Panc1 (cell line): ENCODE measurements at regions of chr11 and their contacts with region 1.

Region 1: DNA sequence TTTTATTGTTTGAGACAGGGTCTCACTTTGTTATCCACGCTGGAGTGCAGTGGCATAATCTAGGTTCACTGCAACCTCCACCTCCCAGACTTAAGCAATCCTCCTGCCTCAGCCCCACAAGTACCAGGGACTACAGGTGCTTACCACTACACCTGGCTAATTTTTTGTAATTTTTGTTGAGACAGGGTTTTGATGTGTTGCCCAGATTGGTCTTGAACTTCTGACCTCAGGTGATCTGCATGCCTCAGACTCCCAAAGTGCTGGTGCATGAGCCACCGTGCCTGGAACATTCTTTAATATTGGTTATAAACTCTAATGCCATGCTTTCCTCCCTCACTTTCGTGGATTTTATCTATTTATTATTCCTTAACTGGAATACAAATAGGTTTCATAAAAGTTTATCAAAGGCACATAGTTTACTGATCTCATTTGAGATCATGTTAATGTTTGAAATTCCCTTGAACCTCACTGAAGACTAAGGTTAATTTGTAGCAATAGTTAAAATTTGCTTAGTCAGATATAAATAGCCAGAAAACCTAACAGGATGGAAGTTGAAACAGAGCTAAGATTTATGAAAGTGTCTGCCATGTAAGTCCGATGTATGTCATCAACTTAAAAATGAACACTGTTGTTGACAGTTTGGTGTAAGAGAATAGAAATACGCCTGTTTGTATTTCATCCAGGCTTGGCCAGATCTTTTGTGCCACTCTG is 27.6 kb downstream of the KDM2A start:
- DNase-seq: no peak
- ATAC-seq: no peak
- H3K4me3 ChIP-seq: no peak overlapping the region
- H3K27ac ChIP-seq: no peak overlapping the region
- H3K4me1 ChIP-seq: no peaks in the 10 kb centered on the region
- H3K27me3 ChIP-seq: no peaks in the 10 kb centered on the region
- CTCF ChIP-seq: no peak

Region 2: GRCh38 chr11:66638177-66639065 is 508.2 kb before region 1 on chr11 and contains the start of gene RBM4:
- CTCF ChIA-PET with region 1: no interaction called
- POLR2A ChIA-PET with region 1: no interaction called
- in situ Hi-C with region 1: no loop called
- intact Hi-C with region 1: no loop called
- DNase-seq: peak; percentile 99
- ATAC-seq: peak; percentile 96
- H3K4me3 ChIP-seq: peak within 1 kb of the TSS; percentile 91 to 93
- H3K27ac ChIP-seq: peak within 1 kb of the TSS; percentile 97
- H3K4me1 ChIP-seq: peaks cover 47% of the 10 kb centered on the region
- H3K27me3 ChIP-seq: no peaks in the 10 kb centered on the region
- CTCF ChIP-seq: no peak
- total RNA-seq, gene RBM4: 195 TPM

Region 3: DNA sequence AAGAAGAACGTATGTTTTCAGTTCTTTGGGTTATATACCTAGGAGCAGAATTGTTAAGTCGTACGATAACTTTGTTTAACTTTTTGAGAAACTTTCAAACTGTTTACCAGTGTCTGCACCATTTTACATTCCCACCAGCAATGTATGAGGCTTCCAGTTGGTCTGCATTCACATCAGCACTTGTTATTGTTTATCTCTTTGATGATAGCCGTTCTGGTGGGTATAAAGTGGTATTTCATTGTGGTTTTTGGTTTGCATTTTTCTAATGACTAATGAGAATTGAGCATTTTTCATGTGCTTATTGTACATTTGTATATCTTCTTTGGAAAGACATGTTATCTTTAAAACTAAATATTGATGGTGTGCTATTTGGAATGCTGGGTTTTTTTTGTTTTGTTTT is 32.2 kb after region 1 on chr11:
- CTCF ChIA-PET with region 1: interaction called, 4 read pairs
- POLR2A ChIA-PET with region 1: no interaction called
- in situ Hi-C with region 1: loop called (anchors 5 kb)
- intact Hi-C with region 1: no loop called
- DNase-seq: no peak
- ATAC-seq: no peak
- H3K4me3 ChIP-seq: no peak overlapping the region
- H3K27ac ChIP-seq: no peak overlapping the region
- H3K4me1 ChIP-seq: no peaks in the 10 kb centered on the region; the same call in 1 of the 2 replicates
- H3K27me3 ChIP-seq: no peaks in the 10 kb centered on the region
- CTCF ChIP-seq: no peak

Region 4: DNA sequence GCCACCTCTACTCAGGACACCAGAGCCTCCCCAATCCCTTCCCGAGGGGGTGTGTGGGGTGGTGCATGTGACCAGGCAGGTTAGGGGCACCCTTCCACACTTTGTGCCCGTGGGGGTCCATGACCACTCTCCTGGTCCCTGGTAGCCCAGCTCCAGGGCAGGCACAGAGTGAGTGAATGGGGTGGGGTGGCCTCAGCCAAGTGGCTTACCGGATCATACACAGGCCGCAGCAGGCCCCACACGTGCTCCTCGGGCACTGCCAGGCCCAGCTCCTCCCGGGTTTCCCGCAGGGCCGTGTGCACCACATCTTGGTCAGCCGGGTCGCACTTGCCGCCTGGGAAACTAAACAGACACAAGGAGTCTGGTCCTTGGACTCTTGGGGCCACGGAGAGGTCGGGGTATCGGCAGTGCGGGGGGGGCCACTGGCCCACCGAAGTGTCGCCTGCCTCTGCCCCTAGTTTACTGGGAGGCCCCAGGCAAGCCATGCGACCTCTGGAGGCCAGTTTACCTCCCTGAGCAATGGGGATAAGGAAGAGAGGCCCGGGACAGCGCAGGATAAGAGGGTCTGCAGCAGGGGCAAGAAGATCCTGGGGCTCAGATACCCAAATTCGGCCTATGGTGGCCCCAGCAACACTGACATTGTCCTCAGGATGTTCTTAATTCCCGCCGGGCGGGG is 482.2 kb after region 1 on chr11:
- CTCF ChIA-PET with region 1: no interaction called
- POLR2A ChIA-PET with region 1: no interaction called
- in situ Hi-C with region 1: no loop called
- intact Hi-C with region 1: no loop called
- DNase-seq: no peak
- ATAC-seq: no peak
- H3K4me3 ChIP-seq: peak overlapping the region; percentile 66 to 67
- H3K27ac ChIP-seq: no peak overlapping the region
- H3K4me1 ChIP-seq: peaks cover 13% of the 10 kb centered on the region; the same call in 1 of the 2 replicates
- H3K27me3 ChIP-seq: no peaks in the 10 kb centered on the region
- CTCF ChIP-seq: 0 out of 2 replicates have a peak, but pooled peaks have one; percentile 1